ENCODE measurements at regions of chr1 and their contacts with region 1.

Region 1: GRCh38 chr1:197521118-197521739 is 253.2 kb downstream of the CRB1 start:
- DNase-seq: no peak
- H3K4me3 ChIP-seq: no peak overlapping the region
- H3K27ac ChIP-seq: no peak overlapping the region
- H3K4me1 ChIP-seq: no peaks in the 10 kb centered on the region
- H3K27me3 ChIP-seq: no peaks in the 10 kb centered on the region
- CTCF ChIP-seq: peak in 2 of 4 experiments; percentile 18 to 44
- EP300 ChIP-seq: no peak
- POLR2A ChIP-seq: no peak

Region 2: GRCh38 chr1:197595304-197595904 is 74.2 kb after region 1 on chr1:
- intact Hi-C with region 1: no loop called
- DNase-seq: no peak
- H3K4me3 ChIP-seq: no peak overlapping the region
- H3K27ac ChIP-seq: no peak overlapping the region
- H3K4me1 ChIP-seq: no peaks in the 10 kb centered on the region
- H3K27me3 ChIP-seq: no peaks in the 10 kb centered on the region
- CTCF ChIP-seq: no peak
- EP300 ChIP-seq: no peak
- POLR2A ChIP-seq: no peak

Region 3: DNA sequence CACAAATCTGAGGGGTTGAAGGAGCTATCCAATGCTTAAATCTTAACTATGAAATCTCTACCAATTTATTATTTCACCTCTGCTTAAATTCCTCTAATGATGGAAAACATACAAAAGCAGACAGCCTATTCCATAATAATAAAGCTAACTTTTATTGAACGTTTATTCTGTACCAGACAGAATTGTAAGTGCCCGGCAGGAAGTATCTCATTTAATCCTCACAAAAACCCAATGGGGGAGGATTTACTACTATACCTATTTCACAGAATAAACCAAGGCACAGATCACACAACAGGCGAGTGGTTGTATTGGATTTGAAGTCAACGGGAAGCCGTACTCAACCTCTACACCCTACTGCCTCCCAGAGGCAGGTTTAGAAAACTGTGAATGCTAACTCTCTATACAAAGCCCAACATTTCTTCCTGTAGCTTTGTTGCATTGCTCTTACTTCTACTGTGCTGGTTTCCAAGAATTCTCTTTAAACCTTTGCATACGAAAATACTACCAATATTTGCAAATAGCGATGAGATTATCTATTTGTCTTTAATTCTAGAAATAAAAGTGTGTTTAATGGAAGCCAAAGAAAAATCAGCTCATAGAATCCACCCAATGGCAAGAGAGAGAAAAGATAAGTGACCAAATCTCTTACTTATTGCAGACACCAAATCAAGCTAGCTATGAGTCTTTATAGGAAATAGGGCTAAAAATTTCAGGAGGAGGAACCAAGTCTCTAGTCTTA is 347.7 kb after region 1 on chr1:
- intact Hi-C with region 1: loop called (anchors 5 kb)
- DNase-seq: no peak
- H3K4me3 ChIP-seq: no peak overlapping the region
- H3K27ac ChIP-seq: no peak overlapping the region
- H3K4me1 ChIP-seq: no peaks in the 10 kb centered on the region
- H3K27me3 ChIP-seq: no peaks in the 10 kb centered on the region
- CTCF ChIP-seq: peak in 3 of 4 experiments; percentile 32 to 46 (median 39)
- EP300 ChIP-seq: no peak
- POLR2A ChIP-seq: no peak

Region 4: GRCh38 chr1:198465201-198466144 is 944.2 kb after region 1 on chr1:
- intact Hi-C with region 1: loop called (anchors 10 kb)
- DNase-seq: no peak
- H3K4me3 ChIP-seq: no peak overlapping the region
- H3K27ac ChIP-seq: no peak overlapping the region
- H3K4me1 ChIP-seq: no peaks in the 10 kb centered on the region
- H3K27me3 ChIP-seq: no peaks in the 10 kb centered on the region
- CTCF ChIP-seq: peak in 3 of 4 experiments; percentile 31 to 51 (median 32)
- EP300 ChIP-seq: no peak
- POLR2A ChIP-seq: no peak

Measured in sigmoid colon (tissue), 7 donors.